ENCODE measurements at regions of chr20 and their contacts with region 1.

Region 1: DNA sequence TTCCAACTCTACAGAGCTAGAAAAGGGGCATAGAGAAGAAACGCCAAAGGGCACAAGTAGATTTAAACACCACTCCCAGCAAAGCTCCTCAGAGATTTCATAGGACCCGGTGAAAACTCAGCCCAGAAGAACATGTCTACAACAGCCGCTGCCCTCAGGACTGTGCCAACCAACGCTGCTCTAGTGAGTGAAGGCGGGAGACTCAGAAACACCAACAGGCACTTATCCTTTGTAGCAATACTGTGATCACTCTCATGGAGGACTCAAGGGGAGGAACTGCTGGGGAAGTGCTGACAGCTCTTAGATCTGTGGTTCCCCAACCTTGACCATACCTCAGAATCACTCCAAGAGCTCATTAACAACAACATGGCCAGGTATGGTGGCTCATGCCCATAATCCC is 39.5 kb downstream of the STAU1 start:
- DNase-seq: no peak
- ATAC-seq: no peak
- H3K4me3 ChIP-seq: no peak overlapping the region
- H3K4me3 Mint-ChIP-seq: no peak overlapping the region
- H3K27ac ChIP-seq: no peak overlapping the region
- H3K27ac Mint-ChIP-seq: no peak overlapping the region
- H3K4me1 ChIP-seq: no peaks in the 10 kb centered on the region
- H3K4me1 Mint-ChIP-seq: peaks cover 21 to 23% (median 22%) of the 10 kb centered on the region in 3 donors
- H3K27me3 ChIP-seq: no peaks in the 10 kb centered on the region
- H3K27me3 Mint-ChIP-seq: no peaks in the 10 kb centered on the region

Region 2: GRCh38 chr20:49814057-49814682 is 665.6 kb after region 1 on chr20:
- CTCF ChIA-PET with region 1: no interaction called
- POLR2A ChIA-PET with region 1: interaction called in 1 of 2 experiments, 14 read pairs
- DNase-seq: no peak
- ATAC-seq: no peak
- H3K4me3 ChIP-seq: no peak overlapping the region
- H3K4me3 Mint-ChIP-seq: peak overlapping the region; percentile 93 to 95 (median 95)
- H3K27ac ChIP-seq: peak overlapping the region; percentile 10
- H3K27ac Mint-ChIP-seq: peak overlapping the region; percentile 93 to 96
- H3K4me1 ChIP-seq: peaks cover 11 to 18% of the 10 kb centered on the region in 2 experiments
- H3K4me1 Mint-ChIP-seq: peaks cover 32 to 45% (median 43%) of the 10 kb centered on the region in 3 donors
- H3K27me3 ChIP-seq: no peaks in the 10 kb centered on the region
- H3K27me3 Mint-ChIP-seq: no peaks in the 10 kb centered on the region